Activated CD4-positive, alpha-beta memory T cell treated with anti-CD3 and anti-CD28 coated beads for 36 hours (primary cell): ENCODE measurements at regions of chr5 and their contacts with region 1.

Region 1: DNA sequence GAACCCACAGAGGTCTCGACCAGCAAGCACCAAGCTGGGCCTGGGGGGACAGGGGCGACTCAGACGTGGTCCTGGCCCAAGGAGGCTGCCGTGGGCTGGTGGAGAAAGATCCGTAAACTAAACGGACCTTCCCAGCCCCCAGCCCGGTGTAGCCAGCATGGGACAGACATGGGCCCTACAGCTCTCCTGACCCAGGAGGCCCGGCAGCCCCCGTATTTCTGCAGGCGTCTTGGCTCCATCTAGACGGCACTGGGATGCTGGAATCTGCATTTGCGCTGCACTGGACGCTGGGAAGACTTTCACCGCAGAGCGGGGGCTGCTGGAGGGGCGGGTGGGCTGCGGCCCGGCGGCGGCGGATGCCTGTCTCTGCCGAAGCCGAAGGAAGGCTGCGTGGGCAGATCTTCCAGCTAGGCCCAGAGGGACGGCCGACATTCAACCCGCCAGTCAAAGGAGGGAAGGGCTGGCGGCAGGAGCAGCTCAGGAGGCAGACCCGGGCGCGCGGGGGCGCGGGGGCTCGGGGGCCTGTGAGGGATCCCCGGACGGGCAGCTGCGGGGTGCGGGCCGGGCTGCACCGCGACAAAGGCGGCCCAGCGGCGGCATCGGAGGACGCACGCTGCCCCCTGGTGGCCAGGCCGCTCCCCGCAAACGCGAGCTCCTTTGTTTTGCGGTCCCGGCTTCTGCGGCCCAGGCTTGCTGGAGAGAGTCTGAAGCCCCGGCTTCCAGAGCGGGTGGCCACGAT is 266.2 kb downstream of the NSG2 start:
- DNase-seq: peak; percentile 71
- H3K4me3 Mint-ChIP-seq: no peak overlapping the region
- H3K27ac Mint-ChIP-seq: no peak overlapping the region
- H3K4me1 Mint-ChIP-seq: peaks cover 2% of the 10 kb centered on the region
- H3K27me3 Mint-ChIP-seq: peaks cover 41% of the 10 kb centered on the region

Region 2: DNA sequence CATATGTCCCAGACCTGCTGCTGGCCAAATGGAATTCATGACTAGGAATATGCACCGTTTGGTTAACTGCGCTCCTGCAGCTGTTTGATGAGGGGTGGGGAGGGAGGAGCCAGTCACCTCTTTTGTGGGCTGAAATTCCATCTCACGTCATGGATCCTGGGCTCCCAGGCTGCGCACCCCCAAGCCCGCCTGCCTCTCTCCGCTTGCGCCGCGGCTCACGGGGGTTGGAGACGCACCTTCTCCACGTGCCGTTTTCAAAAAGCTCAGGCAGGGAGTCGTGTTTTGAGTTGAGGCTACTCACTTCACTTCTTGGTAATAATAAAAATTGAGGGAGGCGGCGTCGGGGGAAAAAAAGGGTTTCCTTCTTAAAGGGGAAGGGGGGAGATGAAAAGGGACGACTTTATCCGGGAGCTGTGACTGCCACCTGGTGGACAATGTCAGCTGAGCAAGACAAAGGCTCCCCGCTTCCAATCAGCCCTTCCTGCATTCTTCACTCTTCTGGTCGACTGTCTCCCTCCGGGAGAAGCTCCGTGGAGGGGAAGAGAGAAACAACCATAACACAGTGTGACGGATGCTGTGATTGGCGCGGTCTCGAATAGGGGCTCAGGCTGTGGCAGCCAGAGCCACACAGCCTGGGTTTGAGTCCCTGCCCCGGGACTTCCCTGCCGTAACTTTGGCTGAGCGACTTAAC is 338.6 kb before region 1 on chr5:
- CTCF ChIA-PET with region 1: interaction called, 4 read pairs
- POLR2A ChIA-PET with region 1: no interaction called
- intact Hi-C with region 1: loop called (anchors 1 kb)
- DNase-seq: peak; percentile 85
- H3K4me3 Mint-ChIP-seq: peak overlapping the region; percentile 68
- H3K27ac Mint-ChIP-seq: no peak overlapping the region
- H3K4me1 Mint-ChIP-seq: peaks cover 9% of the 10 kb centered on the region
- H3K27me3 Mint-ChIP-seq: peaks cover 4% of the 10 kb centered on the region

Region 3: DNA sequence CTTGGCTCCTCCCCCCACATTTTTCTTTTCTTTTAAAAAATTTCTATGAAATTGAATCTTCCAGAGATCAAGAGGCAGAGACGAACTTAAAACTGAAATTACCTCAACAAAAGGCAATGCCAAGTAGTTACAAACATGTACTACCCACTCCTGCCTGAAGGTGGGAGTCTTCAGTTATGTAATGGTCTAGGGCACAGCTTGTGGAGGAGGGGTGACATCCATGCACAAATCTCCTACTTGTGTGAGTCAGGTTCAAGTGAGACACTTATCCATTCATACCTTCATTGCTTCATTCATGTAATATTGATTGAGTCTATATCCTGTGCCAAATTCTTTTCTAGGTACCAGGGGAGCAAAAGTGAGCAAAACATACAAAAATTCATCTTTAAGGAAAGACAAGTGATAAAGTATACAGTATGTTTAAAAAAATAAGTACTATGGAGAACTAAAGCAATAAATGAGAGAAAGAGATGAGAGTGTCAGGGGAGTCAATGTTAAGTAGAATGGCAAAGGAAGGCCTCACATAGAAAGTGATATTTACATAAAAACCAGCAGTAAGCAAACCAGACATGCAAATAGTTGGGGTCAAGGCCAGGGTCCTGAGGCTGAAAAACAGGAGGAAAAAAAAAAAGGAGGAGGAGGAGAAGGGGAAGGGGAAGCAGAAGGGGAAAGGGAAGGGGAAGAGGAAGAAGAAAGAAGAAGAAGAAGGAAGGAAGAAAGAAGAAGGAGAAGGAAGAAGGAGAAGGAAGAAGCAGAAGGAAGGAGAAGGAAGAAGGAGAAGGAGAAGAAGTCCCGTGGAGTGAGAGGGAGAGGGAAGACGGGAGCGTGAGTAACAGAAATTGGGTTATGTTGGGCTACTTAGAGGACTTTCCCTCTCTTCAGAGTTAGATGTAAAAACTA is 291.1 kb before region 1 on chr5:
- CTCF ChIA-PET with region 1: interaction called, 7 read pairs
- POLR2A ChIA-PET with region 1: no interaction called
- intact Hi-C with region 1: loop called (anchors 5 kb)
- DNase-seq: peak; percentile 17
- H3K4me3 Mint-ChIP-seq: no peak overlapping the region
- H3K27ac Mint-ChIP-seq: no peak overlapping the region
- H3K4me1 Mint-ChIP-seq: no peaks in the 10 kb centered on the region
- H3K27me3 Mint-ChIP-seq: peaks cover 30% of the 10 kb centered on the region

Region 4: GRCh38 chr5:174323878-174324281 is 12.2 kb after region 1 on chr5:
- CTCF ChIA-PET with region 1: interaction called, 14 read pairs
- POLR2A ChIA-PET with region 1: no interaction called
- intact Hi-C with region 1: no loop called
- DNase-seq: peak; percentile 15
- H3K4me3 Mint-ChIP-seq: no peak overlapping the region
- H3K27ac Mint-ChIP-seq: no peak overlapping the region
- H3K4me1 Mint-ChIP-seq: no peaks in the 10 kb centered on the region
- H3K27me3 Mint-ChIP-seq: peaks cover 29% of the 10 kb centered on the region

Region 5: GRCh38 chr5:174335682-174336364 is 24.1 kb after region 1 on chr5:
- CTCF ChIA-PET with region 1: no interaction called
- POLR2A ChIA-PET with region 1: no interaction called
- intact Hi-C with region 1: no loop called
- DNase-seq: no peak
- H3K4me3 Mint-ChIP-seq: no peak overlapping the region
- H3K27ac Mint-ChIP-seq: no peak overlapping the region
- H3K4me1 Mint-ChIP-seq: no peaks in the 10 kb centered on the region
- H3K27me3 Mint-ChIP-seq: peaks cover 19% of the 10 kb centered on the region